Sciatic nerve (tissue), 2 donors: ENCODE measurements at regions of chr1 and their contacts with region 1.

Region 1: DNA sequence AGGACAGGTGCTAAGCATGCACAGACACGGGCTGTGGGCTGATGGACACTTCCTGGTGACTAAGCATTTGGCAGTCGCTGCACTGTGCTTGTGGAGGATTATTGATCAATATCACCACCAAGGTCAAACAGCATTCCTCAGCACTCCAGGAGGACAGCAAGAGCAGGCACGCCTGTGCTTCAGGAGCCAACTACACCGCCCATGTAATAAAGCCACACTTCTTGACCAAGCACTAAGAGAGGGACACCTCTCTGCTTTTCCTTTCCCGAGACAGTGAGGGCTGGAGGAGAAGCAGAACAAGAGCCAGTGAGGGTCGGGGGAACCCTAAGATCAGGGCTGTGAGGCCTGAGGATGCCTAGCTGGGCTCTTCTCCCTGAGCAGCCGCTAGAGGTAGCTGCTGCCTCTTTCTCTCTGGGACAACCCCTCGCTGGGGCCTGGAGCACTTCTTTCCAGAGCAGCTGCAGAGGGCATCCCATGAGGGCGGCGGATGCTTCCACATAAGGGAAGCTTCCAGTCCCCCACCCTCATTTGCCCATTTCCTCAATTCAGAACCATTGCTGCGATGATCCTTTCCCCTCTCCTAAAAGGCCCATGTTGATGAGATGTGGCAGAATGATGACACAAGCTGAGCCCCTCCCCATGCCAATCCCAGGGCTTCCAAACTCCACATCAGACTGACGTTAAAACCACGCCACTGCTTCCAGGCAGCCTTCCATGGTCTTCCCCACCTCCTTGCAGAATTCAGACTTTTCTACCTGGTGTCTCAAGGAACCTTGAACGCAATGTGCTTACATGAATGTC is 19.1 kb downstream of the RAB7B start:
- DNase-seq: peak; percentile 80
- ATAC-seq: peak; percentile 91

Region 2: DNA sequence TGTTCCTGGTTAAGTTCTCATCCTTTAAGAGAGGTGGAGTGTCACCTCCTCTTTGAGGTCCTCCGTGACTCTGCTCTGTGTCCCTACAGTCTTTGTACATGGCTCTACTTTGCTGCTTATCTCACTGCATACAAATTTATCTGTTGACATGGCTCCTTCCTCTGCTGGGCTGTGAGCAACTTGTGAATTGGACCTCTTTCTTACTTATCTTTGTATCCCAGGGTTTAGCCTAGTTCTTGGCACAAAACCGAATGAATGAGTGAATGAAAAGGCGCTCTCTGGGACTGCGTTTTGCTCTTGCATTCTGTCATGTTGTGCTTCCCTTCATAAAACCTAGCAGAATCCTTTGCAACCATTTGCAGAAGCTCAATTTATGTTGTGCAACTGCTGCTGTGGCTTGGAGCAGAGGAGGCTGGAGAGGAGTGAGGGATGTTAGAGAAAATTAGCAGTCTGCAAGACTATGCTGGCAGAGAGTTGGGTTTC is 53.3 kb before region 1 on chr1:
- intact Hi-C with region 1: loop called (anchors 2 kb)
- DNase-seq: no peak
- ATAC-seq: no peak

Region 3: GRCh38 chr1:206100346-206100745 is 116.2 kb after region 1 on chr1:
- intact Hi-C with region 1: loop called (anchors 2 kb)
- DNase-seq: no peak
- ATAC-seq: no peak